PC-9 (cell line): ENCODE measurements at regions of chr17 and their contacts with region 1.

Region 1: GRCh38 chr17:57939797-57940196 is 15.4 kb downstream of the CUEDC1 start:
- DNase-seq: no peak
- H3K4me3 ChIP-seq: no peak overlapping the region
- H3K27ac ChIP-seq: no peak overlapping the region
- H3K4me1 ChIP-seq: peaks cover 58% of the 10 kb centered on the region
- H3K27me3 ChIP-seq: no peaks in the 10 kb centered on the region
- CTCF ChIP-seq: no peak

Region 2: GRCh38 chr17:57649731-57650484 is 289.9 kb before region 1 on chr17:
- CTCF ChIA-PET with region 1: no interaction called
- POLR2A ChIA-PET with region 1: interaction called, 14 read pairs
- intact Hi-C with region 1: no loop called
- DNase-seq: no peak
- H3K4me3 ChIP-seq: no peak overlapping the region
- H3K27ac ChIP-seq: no peak overlapping the region
- H3K4me1 ChIP-seq: no peaks in the 10 kb centered on the region
- H3K27me3 ChIP-seq: peaks cover 12% of the 10 kb centered on the region; the same call in 1 of the 2 replicates
- CTCF ChIP-seq: no peak